ENCODE measurements at regions of chr1 and their contacts with region 1.

Region 1: GRCh38 chr1:40404670-40405462 is 31.3 kb downstream of the SMAP2 start:
- DNase-seq: no peak
- H3K4me3 ChIP-seq: no peak overlapping the region
- H3K27ac ChIP-seq: peak overlapping the region in 3 of 4 donors; percentile 10 to 39 (median 11)
- H3K4me1 ChIP-seq: peaks cover 0 to 22% (median 0%) of the 10 kb centered on the region in 4 donors
- H3K27me3 ChIP-seq: no peaks in the 10 kb centered on the region
- CTCF ChIP-seq: peak; percentile 78 to 88 (median 88)
- EP300 ChIP-seq: no peak
- POLR2A ChIP-seq: no peak

Region 2: DNA sequence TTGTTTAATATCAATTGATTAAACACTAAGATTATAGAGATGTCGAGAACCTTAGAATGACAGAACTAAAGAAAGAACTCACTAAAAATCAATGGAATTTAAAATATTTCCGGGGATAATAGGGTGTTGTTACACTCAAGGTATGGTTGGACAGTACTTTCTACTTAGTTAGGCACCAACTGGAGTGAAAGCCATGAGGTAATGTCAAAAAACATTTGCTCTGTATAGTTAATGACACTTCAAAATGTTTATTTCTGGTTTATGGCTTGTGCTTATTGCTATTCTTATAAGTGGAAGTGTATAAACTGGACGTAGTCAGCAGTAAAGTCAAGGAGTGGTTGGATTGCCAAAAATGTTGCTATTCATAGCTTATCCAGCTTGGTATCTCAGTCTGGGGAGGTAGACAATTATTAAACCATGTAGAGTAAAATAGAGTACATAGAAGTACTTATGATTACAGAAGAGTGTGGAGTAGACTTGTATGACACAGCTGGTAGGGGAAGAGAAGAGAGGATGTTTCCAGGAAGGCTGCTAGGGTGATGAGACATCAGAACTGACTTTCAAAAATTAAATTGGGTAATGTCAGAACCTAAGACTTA is 970.0 kb before region 1 on chr1:
- in situ Hi-C with region 1: no loop called
- intact Hi-C with region 1: no loop called
- DNase-seq: no peak
- H3K4me3 ChIP-seq: no peak overlapping the region
- H3K27ac ChIP-seq: peak overlapping the region; percentile 40 to 65 (median 54)
- H3K4me1 ChIP-seq: peaks cover 0 to 17% (median 10%) of the 10 kb centered on the region in 4 donors
- H3K27me3 ChIP-seq: no peaks in the 10 kb centered on the region
- CTCF ChIP-seq: no peak
- EP300 ChIP-seq: no peak
- POLR2A ChIP-seq: no peak

Region 3: GRCh38 chr1:40315239-40315794 is 89.5 kb before region 1 on chr1:
- in situ Hi-C with region 1: no loop called
- intact Hi-C with region 1: loop called (anchors 10 kb)
- DNase-seq: peak; percentile 87
- H3K4me3 ChIP-seq: peak overlapping the region; percentile 11 to 54 (median 34)
- H3K27ac ChIP-seq: peak overlapping the region in 1 of 4 donors; percentile 5
- H3K4me1 ChIP-seq: peaks cover 9 to 37% (median 27%) of the 10 kb centered on the region in 4 donors
- H3K27me3 ChIP-seq: peaks cover 53% of the 10 kb centered on the region
- CTCF ChIP-seq: peak; percentile 93 to 97 (median 95)
- EP300 ChIP-seq: no peak
- POLR2A ChIP-seq: no peak

Region 4: DNA sequence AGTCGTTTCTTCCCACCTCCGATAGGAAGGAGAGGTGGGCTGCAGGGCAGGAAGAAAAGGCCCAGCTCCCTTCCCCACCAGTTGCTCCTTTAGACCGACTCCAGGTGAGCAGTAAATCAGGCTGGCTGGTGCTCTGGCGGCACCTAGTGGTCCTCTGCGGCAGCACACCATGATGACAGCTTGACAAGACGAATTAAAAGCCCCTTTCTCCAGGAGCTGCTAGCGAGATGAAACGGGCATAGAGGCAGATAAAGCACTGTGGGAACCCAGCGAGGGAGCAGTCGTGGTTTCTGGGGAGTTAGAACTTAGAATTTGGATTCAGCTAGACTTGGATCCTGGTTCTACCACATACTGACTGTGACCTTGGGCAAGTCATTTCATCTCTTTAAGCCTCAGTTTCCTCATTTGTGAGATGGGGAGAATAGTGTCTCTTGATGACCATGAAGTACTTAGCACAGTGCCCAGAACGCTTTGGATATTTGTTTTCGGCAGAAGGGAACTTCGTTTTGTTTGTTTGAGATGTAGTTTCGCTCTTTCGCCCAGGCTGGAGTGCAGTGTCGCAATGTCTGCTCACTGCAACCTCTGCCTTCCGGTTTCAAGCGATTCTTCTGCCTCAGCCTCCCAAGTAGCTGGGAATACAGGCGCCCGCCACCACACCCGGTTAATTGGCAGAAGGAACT is 66.0 kb before region 1 on chr1:
- in situ Hi-C with region 1: loop called in 2 of 4 experiments (anchors 5 to 10 kb)
- intact Hi-C with region 1: no loop called
- DNase-seq: peak; percentile 89
- H3K4me3 ChIP-seq: peak overlapping the region in 1 of 4 donors; percentile 30
- H3K27ac ChIP-seq: no peak overlapping the region
- H3K4me1 ChIP-seq: peaks cover 0 to 8% (median 3%) of the 10 kb centered on the region in 4 donors
- H3K27me3 ChIP-seq: no peaks in the 10 kb centered on the region
- CTCF ChIP-seq: peak; percentile 96 to 99 (median 98)
- EP300 ChIP-seq: no peak
- POLR2A ChIP-seq: no peak

Region 5: GRCh38 chr1:40344597-40344996 is 60.3 kb before region 1 on chr1:
- in situ Hi-C with region 1: loop called in 2 of 4 experiments (anchors 5 to 10 kb)
- intact Hi-C with region 1: no loop called
- DNase-seq: peak; percentile 52
- H3K4me3 ChIP-seq: no peak overlapping the region
- H3K27ac ChIP-seq: peak overlapping the region in 1 of 4 donors; percentile 18
- H3K4me1 ChIP-seq: no peaks in the 10 kb centered on the region
- H3K27me3 ChIP-seq: no peaks in the 10 kb centered on the region
- CTCF ChIP-seq: no peak
- EP300 ChIP-seq: no peak
- POLR2A ChIP-seq: peak; percentile 10